CD4-positive, alpha-beta memory T cell (primary cell): ENCODE measurements at regions of chr14 and their contacts with region 1.

Region 1: GRCh38 chr14:97978341-97978740 is 1181.2 kb downstream of the VRK1 start:
- DNase-seq: peak; percentile 64 to 85 (median 67)
- H3K4me3 ChIP-seq: peak overlapping the region in 1 of 2 donors; percentile 64
- H3K4me3 Mint-ChIP-seq: peak overlapping the region; percentile 86 to 95 (median 92)
- H3K27ac ChIP-seq: peak overlapping the region; percentile 73
- H3K27ac Mint-ChIP-seq: peak overlapping the region; percentile 95 to 97 (median 96)
- H3K4me1 ChIP-seq: peaks cover 47% of the 10 kb centered on the region
- H3K4me1 Mint-ChIP-seq: peaks cover 39 to 67% (median 50%) of the 10 kb centered on the region in 4 donors
- H3K27me3 ChIP-seq: no peaks in the 10 kb centered on the region
- H3K27me3 Mint-ChIP-seq: peaks cover 0 to 2% of the 10 kb centered on the region in 2 donors

Region 2: DNA sequence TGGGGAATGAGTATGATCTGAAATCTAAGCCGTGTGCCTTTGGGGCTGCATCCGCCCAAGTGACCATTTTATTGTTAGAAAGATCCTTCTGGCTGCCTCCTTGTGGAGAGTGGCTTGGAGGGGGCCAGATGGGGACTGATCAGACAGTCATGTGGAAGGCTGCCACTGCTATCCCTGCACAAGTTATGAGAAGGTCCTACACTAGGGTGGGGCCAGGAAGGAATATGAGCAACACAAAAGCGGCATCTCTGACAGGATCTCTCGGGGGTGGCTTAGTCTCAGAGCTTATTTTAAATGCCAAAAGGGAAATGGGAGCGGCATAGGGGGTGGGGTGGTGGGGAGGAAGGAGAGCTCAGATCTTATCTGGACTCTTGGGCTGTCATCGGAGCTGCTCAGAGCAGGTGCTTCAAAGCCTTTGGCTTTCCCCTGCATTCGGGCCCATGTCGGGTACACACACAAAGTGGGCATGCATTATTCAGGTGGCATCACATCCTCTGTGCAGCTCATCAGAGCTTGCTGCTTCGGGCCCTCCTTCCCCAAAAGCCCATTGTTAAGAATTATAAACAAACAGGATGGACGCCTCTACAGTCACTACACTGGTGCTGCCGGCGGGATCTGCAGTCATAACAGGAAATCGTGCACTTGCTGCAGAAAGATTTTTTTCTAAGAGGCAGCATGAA is 375.8 kb before region 1 on chr14:
- CTCF ChIA-PET with region 1: interaction called, 17 read pairs
- POLR2A ChIA-PET with region 1: interaction called, 37 read pairs
- intact Hi-C with region 1: loop called (anchors 1 kb)
- DNase-seq: peak; percentile 83 to 94 (median 88)
- H3K4me3 ChIP-seq: peak overlapping the region; percentile 5 to 21
- H3K4me3 Mint-ChIP-seq: no peak overlapping the region
- H3K27ac ChIP-seq: peak overlapping the region; percentile 72
- H3K27ac Mint-ChIP-seq: no peak overlapping the region
- H3K4me1 ChIP-seq: peaks cover 69% of the 10 kb centered on the region
- H3K4me1 Mint-ChIP-seq: peaks cover 4 to 41% (median 19%) of the 10 kb centered on the region in 4 donors
- H3K27me3 ChIP-seq: no peaks in the 10 kb centered on the region
- H3K27me3 Mint-ChIP-seq: no peaks in the 10 kb centered on the region

Region 3: GRCh38 chr14:97994020-97994531 is 15.7 kb after region 1 on chr14:
- CTCF ChIA-PET with region 1: interaction called, 41 read pairs
- POLR2A ChIA-PET with region 1: interaction called, 41 read pairs
- intact Hi-C with region 1: loop called (anchors 1 kb)
- DNase-seq: peak; percentile 66 to 75 (median 71)
- H3K4me3 ChIP-seq: no peak overlapping the region
- H3K4me3 Mint-ChIP-seq: peak overlapping the region in 7 of 8 donors; percentile 28 to 72 (median 67)
- H3K27ac ChIP-seq: peak overlapping the region; percentile 50
- H3K27ac Mint-ChIP-seq: peak overlapping the region; percentile 82 to 96 (median 92)
- H3K4me1 ChIP-seq: peaks cover 59% of the 10 kb centered on the region
- H3K4me1 Mint-ChIP-seq: peaks cover 54 to 78% (median 66%) of the 10 kb centered on the region in 4 donors
- H3K27me3 ChIP-seq: no peaks in the 10 kb centered on the region
- H3K27me3 Mint-ChIP-seq: no peaks in the 10 kb centered on the region

Region 4: GRCh38 chr14:98173305-98173704 is 195.0 kb after region 1 on chr14:
- CTCF ChIA-PET with region 1: interaction called, 8 read pairs
- POLR2A ChIA-PET with region 1: interaction called, 23 read pairs
- intact Hi-C with region 1: no loop called
- DNase-seq: peak; percentile 74 to 80 (median 77)
- H3K4me3 ChIP-seq: peak overlapping the region in 1 of 2 donors; percentile 33
- H3K4me3 Mint-ChIP-seq: peak overlapping the region; percentile 75 to 87 (median 81)
- H3K27ac ChIP-seq: peak overlapping the region; percentile 64
- H3K27ac Mint-ChIP-seq: peak overlapping the region; percentile 86 to 99 (median 94)
- H3K4me1 ChIP-seq: peaks cover 100% of the 10 kb centered on the region
- H3K4me1 Mint-ChIP-seq: peaks cover 87 to 100% (median 93%) of the 10 kb centered on the region in 4 donors
- H3K27me3 ChIP-seq: no peaks in the 10 kb centered on the region
- H3K27me3 Mint-ChIP-seq: no peaks in the 10 kb centered on the region

Region 5: DNA sequence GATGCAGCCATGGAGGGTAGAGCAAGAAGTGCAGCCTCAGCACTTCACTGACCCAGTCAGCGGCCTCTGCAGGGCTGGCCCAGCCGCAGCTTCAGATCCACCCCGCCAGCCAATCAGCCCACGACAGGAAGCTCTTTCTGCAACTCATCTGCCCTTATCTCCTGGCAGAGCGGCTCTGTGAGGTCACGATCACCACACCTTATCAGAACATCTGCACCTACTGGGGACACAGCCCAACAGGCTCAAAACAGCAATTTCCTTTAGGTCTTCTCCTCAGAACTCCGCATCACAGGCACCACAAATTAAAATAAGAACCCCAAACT is 1006.3 kb after region 1 on chr14:
- CTCF ChIA-PET with region 1: interaction called, 9 read pairs
- POLR2A ChIA-PET with region 1: interaction called, 7 read pairs
- intact Hi-C with region 1: loop called (anchors 10 kb)
- DNase-seq: peak; percentile 81 to 87 (median 87)
- H3K4me3 ChIP-seq: peak overlapping the region in 1 of 2 donors; percentile 16
- H3K4me3 Mint-ChIP-seq: peak overlapping the region; percentile 42 to 93 (median 81)
- H3K27ac ChIP-seq: peak overlapping the region; percentile 47
- H3K27ac Mint-ChIP-seq: peak overlapping the region; percentile 92 to 99 (median 97)
- H3K4me1 ChIP-seq: peaks cover 37% of the 10 kb centered on the region
- H3K4me1 Mint-ChIP-seq: peaks cover 32 to 69% (median 53%) of the 10 kb centered on the region in 4 donors
- H3K27me3 ChIP-seq: no peaks in the 10 kb centered on the region
- H3K27me3 Mint-ChIP-seq: no peaks in the 10 kb centered on the region

Region 6: DNA sequence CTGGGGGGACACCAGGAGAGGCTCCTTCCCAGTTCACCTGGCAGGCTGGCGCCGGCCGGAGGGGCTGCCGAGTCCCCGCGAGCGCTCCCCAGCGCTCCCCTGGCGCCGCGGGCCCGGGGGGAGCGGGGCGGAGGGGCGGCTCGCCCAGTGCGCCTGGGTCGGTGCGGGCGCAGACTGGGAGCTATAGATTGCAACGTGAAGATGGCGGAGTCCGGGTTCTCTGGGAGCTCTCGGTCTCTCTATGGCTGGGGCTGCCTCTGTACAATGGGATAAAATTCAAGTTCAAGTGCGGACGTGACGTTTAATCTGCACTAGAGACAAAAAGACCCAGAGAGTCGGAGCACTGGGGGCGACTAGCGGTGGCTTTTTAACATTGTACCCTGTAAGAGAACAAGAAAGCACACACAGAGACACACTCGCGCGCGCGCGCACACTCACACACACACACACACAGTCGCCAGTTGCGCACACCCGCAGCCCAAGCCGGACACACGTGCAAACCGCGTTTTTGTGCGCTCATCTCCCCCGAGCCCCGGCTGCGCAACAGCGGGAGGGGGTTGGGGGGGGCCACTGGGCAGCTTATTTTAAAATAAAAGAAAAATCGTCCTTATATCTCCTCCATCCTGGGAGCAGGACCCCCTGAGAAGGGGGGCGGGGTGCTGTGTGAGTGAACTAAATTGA is 1293.8 kb after region 1 on chr14 and contains the start of gene BCL11B:
- CTCF ChIA-PET with region 1: interaction called, 36 read pairs
- POLR2A ChIA-PET with region 1: interaction called, 197 read pairs
- intact Hi-C with region 1: loop called (anchors 1 kb)
- DNase-seq: peak; percentile 87 to 96 (median 91)
- H3K4me3 ChIP-seq: peak within 1 kb of the TSS; percentile 91 to 93
- H3K4me3 Mint-ChIP-seq: peak within 1 kb of the TSS; percentile 92 to 100 (median 98)
- H3K27ac ChIP-seq: peak within 1 kb of the TSS; percentile 80
- H3K27ac Mint-ChIP-seq: peak within 1 kb of the TSS; percentile 95 to 99 (median 96)
- H3K4me1 ChIP-seq: peaks cover 21% of the 10 kb centered on the region
- H3K4me1 Mint-ChIP-seq: peaks cover 12 to 53% (median 27%) of the 10 kb centered on the region in 4 donors
- H3K27me3 ChIP-seq: no peaks in the 10 kb centered on the region
- H3K27me3 Mint-ChIP-seq: no peaks in the 10 kb centered on the region
- total RNA-seq, gene BCL11B: 163 to 165 TPM